Sciatic nerve (tissue), 2 donors: ENCODE measurements at regions of chr13 and their contacts with region 1.

Region 1: GRCh38 chr13:107205303-107206104 is 637.6 kb upstream of the ARGLU1 start:
- DNase-seq: peak; percentile 82
- ATAC-seq: peak; percentile 79

Region 2: DNA sequence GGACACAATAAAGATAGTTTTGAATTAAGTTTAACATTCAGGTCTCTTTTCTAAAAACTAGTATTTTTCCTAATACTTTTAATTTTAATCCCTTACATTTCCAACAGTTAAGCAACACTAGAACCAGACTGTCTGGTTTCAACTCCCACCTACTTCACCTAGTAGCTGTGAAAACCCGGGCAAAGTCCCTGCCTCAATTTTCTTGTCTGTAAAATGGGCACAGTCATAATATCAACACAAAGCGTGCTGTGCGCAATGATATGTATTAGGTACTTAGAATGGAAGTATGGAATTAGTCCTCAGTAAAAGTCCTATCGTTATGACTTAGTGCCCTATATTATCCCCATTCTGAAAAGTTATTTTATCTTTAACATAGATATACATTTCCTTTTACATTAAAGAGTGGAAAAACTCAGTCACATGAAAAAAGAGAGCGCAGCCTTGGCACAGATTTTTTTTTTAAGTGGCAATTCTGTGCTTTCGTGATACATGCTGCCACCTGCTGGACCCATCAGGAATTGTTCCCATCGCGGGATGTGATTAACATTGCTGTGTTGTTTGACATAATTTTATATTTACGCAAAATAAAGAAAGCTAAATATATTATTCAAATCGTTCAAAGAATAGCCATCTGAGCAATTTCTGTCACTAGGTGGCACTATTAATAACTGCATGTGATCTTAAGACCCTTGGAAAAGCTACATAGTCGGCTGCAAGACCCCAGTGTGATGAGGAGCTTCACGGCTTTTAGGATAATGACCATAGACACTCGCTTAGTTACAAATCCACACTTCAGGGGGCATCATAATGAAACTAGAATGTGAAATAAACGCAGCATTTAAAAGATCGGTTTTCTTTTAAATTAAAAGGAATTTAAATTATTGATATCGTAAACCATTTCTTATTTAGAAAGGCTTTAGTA is 949.9 kb after region 1 on chr13:
- intact Hi-C with region 1: loop called (anchors 5 kb)
- DNase-seq: peak; percentile 65
- ATAC-seq: no peak